AG04450 (cell line): ENCODE measurements at regions of chr2 and their contacts with region 1.

Region 1: GRCh38 chr2:186480991-186481390 is 5.1 kb upstream of the ZC3H15 start:
- DNase-seq: no peak
- H3K4me3 ChIP-seq: no peak overlapping the region
- H3K27ac ChIP-seq: no peak overlapping the region
- H3K27me3 ChIP-seq: no peaks in the 10 kb centered on the region
- CTCF ChIP-seq: no peak

Region 2: DNA sequence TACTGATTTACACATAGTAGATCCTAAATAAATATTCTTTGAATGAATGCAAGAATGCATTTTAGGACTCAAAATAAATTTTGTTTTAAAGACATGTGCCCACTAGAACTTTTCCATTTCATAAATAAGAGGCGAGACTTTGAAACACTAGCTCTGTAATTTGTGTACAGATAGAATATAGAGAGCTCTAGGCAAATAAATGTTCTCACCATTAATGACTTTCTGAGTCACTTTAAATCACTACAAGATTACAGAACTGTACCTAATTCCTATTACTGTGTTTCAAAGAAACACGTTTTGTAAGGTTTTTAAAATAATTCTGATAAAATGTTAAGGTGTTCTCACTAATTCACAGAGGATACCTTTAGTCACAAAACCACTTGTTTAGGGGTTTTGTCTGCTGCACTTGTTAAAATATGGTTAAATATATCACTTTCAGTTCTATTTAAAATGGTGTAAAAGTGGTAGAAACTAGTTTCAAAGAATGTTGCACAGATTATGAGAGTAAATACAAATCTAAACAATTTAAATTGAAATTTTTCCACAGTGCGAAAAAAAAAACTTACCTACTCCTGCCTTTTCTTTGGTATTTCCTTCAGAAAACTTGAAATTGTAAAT is 153.6 kb before region 1 on chr2:
- CTCF ChIA-PET with region 1: no interaction called
- POLR2A ChIA-PET with region 1: no interaction called
- DNase-seq: no peak
- H3K4me3 ChIP-seq: no peak overlapping the region
- H3K27ac ChIP-seq: no peak overlapping the region
- H3K27me3 ChIP-seq: no peaks in the 10 kb centered on the region
- CTCF ChIP-seq: no peak

Region 3: GRCh38 chr2:187138265-187138664 is 657.3 kb after region 1 on chr2:
- CTCF ChIA-PET with region 1: no interaction called
- POLR2A ChIA-PET with region 1: interaction called, 11 read pairs
- DNase-seq: no peak
- H3K4me3 ChIP-seq: no peak overlapping the region
- H3K27ac ChIP-seq: no peak overlapping the region
- H3K27me3 ChIP-seq: no peaks in the 10 kb centered on the region
- CTCF ChIP-seq: peak; percentile 72